ENCODE measurements at regions of chr6 and their contacts with region 1.

Region 1: DNA sequence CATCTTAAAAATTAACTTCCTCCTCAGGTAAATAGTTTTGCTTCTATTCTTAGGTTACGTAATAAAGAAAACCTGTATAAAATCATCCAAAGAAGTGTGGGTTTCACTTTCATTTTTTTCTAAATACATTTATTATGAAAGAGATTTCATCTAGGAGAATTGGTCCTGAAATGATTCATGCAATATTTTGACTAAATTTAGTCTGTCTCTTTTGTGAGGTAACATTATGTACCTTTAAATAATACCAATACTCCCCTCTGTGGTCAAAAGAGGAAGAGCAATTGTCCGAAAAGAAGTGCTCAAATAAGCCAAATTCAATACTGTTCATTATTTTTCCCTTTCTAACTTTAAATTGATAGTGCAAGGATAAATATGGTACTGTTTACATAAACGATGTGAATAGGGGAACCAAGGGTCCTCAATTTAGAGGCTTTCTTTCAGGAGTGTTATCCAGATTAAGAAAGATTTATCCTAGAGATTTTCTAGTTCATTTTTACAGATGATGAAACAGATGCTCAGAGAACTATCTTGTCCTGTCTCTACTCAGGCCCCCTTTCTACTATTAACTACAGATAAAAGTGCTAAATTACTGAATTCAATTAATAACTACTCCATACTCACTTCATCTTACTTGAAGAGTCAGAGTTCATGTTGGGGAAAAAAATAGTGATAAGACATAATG is 26.2 kb downstream of the CYP39A1 start:
- DNase-seq: peak in 1 of 4 donors; percentile 34
- ATAC-seq: peak; percentile 81
- H3K4me3 ChIP-seq: no peak overlapping the region
- H3K27ac ChIP-seq: no peak overlapping the region
- H3K4me1 ChIP-seq: no peaks in the 10 kb centered on the region
- H3K27me3 ChIP-seq: no peaks in the 10 kb centered on the region
- CTCF ChIP-seq: peak; percentile 44 to 66

Region 2: DNA sequence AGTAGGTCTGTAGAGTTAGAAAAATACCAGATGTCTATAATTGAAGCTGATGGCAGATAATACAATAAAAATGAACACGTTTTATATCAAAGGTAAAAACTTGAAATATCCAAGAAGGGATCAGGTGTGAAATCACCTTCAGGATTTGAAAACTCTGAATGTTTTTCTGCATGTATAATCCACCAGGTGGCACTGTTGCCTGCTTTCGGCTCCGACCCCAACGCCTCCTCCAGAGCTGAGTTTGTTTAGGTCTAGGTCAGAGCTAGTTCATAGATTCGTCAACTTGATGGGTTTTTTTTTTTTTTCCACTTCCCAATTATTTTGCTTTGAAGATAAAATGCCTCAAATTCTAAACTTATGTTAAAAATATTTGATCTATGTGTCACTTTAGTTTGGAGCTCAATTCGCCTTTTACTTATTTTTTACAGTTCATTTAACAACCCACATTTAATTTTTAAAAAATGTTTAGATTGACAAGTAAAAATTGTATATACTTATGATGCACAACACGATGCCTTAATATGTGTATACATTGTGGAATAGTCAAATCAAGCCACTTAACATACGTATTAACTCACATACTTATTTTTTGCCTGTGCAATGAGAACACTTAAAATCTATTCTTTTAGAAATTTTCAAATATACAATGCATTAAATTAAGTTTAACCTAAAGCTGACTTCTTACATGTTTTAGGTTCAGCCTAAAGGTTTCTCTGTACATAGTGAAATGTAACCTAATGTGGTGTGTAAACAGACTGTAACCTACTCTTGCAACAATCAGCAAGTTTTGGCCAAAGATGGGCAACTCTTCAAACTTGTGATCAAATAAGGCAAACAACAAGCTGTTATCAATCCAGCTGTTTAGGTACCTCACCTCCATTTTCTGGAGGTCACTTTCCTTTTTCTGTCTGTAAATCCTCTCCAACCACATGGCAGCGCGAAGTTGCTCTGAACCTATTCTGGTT is 536.0 kb before region 1 on chr6:
- intact Hi-C with region 1: loop called in 1 of 2 experiments (anchors 10 kb)
- DNase-seq: peak; percentile 39 to 73 (median 59)
- ATAC-seq: peak; percentile 94
- H3K4me3 ChIP-seq: no peak overlapping the region
- H3K27ac ChIP-seq: no peak overlapping the region
- H3K4me1 ChIP-seq: no peaks in the 10 kb centered on the region
- H3K27me3 ChIP-seq: no peaks in the 10 kb centered on the region
- CTCF ChIP-seq: peak; percentile 70 to 74

Region 3: GRCh38 chr6:46419576-46420002 is 206.8 kb before region 1 on chr6:
- intact Hi-C with region 1: loop called in 1 of 2 experiments (anchors 10 kb)
- DNase-seq: peak in 3 of 4 donors; percentile 37 to 81 (median 64)
- ATAC-seq: peak; percentile 84
- H3K4me3 ChIP-seq: no peak overlapping the region
- H3K27ac ChIP-seq: no peak overlapping the region
- H3K4me1 ChIP-seq: no peaks in the 10 kb centered on the region
- H3K27me3 ChIP-seq: no peaks in the 10 kb centered on the region
- CTCF ChIP-seq: peak; percentile 65 to 66

Region 4: GRCh38 chr6:46539866-46540265 is 86.5 kb before region 1 on chr6:
- intact Hi-C with region 1: no loop called
- DNase-seq: peak in 1 of 4 donors; percentile 6
- ATAC-seq: no peak
- H3K4me3 ChIP-seq: no peak overlapping the region
- H3K27ac ChIP-seq: no peak overlapping the region
- H3K4me1 ChIP-seq: no peaks in the 10 kb centered on the region
- H3K27me3 ChIP-seq: no peaks in the 10 kb centered on the region
- CTCF ChIP-seq: no peak